Endothelial cell of umbilical vein (primary cell): ENCODE measurements at regions of chr22 and their contacts with region 1.

Region 1: DNA sequence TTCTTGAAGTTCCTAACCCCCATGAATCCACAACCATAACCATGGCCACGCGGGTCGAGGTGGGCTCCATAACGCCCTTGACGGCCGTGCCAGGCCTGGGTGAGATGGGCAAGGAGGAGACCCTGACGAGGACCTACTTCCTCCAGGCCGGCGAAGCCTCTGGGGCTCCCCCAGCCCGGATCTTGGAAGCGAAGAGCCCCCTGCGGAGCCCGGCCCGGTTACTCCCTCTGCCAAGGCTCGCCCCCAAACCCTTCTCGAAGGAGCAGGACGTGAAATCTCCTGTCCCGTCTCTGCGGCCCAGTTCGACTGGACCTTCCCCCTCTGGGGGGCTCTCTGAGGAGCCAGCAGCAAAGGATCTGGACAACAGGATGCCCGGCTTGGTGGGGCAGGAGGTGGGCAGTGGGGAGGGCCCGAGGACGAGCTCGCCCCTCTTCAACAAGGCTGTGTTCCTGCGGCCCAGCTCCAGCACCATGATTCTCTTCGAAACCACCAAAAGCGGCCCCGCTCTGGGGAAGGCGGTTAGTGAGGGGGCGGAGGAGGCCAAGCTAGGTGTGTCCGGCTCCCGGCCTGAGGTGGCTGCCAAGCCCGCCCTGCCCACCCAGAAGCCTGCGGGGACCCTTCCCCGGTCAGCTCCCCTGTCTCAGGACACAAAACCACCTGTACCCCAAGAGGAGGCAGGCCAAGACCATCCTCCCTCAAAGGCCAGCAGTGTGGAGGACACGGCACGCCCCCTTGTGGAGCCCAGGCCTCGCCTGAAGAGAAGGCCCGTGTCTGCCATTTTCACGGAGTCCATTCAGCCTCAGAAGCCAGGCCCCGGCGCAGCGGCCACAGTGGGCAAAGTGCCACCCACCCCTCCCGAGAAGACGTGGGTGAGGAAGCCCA is 75.7 kb downstream of the KIAA1671 start:
- DNase-seq: peak; percentile 39
- H3K4me3 ChIP-seq: no peak overlapping the region
- H3K27ac ChIP-seq: peak overlapping the region; percentile 12
- H3K4me1 ChIP-seq: peaks cover 19% of the 10 kb centered on the region
- H3K27me3 ChIP-seq: no peaks in the 10 kb centered on the region
- CTCF ChIP-seq: peak; percentile 60 to 81
- POLR2A ChIP-seq: no peak

Region 2: DNA sequence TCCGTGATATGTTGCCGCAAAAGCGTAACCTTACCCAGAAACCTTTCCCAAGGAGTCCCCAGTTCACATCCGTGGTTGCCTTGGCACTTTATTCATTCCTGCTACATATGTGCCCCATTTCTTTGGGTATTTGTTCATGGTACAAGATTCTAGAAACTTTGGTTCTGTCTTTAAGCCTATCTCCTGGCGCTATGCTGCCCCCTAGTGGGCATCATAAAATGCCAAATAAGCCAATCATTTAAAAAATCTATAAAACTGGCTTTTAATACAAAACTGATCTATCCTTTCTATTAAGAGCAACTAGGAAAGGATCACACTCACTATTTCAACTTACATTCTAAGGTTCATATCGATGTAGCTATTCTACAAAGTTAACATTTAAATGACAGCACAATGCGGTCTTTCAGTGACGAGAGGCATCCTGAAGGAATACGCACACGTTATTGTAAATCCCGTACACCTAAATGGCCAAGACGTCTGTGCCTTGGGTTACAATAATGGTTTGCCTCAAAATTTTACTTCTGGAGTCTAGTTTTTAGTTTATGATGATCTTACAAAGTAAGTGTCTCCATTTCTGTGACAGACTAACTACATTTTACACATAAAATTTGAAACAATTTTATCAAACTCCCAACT is 269.9 kb before region 1 on chr22:
- CTCF ChIA-PET with region 1: no interaction called
- POLR2A ChIA-PET with region 1: no interaction called
- dilution Hi-C with region 1: no loop called
- intact Hi-C with region 1: no loop called
- DNase-seq: peak; percentile 70
- H3K4me3 ChIP-seq: no peak overlapping the region
- H3K27ac ChIP-seq: no peak overlapping the region
- H3K4me1 ChIP-seq: peaks cover 25% of the 10 kb centered on the region
- H3K27me3 ChIP-seq: peaks cover 2 to 7% of the 10 kb centered on the region in 2 experiments
- CTCF ChIP-seq: peak; percentile 60 to 70
- POLR2A ChIP-seq: no peak

Region 3: DNA sequence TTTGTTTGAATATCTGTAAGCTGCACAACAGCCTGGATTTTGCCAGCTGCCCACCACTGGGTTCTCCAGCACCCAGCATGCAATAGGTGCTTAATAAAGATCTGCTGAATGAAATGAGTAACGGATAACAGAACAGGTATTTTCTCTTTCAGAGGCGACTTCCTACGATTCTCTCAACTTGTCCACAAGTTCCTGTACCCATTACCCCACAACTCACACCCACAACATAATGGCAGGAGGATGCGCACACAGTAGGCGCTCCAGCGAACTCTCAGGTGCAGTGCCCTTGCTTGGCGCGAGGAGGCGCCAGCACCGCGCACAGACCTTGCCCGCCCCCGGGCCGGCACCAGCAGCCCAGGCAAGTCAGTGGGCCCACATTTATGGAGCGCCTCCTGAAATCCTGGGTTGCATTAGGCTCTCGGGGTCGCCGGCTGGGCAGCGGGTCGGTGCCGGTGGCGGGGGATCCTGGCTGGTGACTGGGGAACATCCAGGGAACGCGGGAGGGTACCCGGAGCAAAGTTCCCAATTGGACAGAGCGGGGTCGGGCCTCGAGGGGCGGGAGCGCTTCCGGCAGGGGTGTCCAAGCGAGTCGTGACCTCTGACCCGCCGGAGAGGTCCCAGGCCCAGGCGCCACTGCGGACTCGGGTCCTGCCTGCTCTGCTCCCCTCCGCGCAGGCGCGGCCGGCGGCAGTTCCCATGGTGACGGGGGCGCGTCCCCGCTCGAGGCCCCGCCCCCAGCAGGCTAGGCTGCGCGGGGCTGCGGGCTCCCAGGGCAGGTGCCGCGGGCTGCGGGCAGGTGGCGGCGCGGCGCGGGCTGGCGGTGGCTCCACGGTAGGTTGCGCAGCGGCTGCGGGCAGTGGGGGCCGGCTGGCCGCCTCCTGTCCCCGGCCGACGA is 76.0 kb before region 1 on chr22 and contains the start of gene KIAA1671:
- CTCF ChIA-PET with region 1: interaction called, 18 read pairs
- POLR2A ChIA-PET with region 1: interaction called, 4 read pairs
- dilution Hi-C with region 1: no loop called
- intact Hi-C with region 1: loop called (anchors 1 kb)
- DNase-seq: peak; percentile 87
- H3K4me3 ChIP-seq: peak within 1 kb of the TSS; percentile 56 to 82 (median 70)
- H3K27ac ChIP-seq: peak within 1 kb of the TSS; percentile 94
- H3K4me1 ChIP-seq: peaks cover 9% of the 10 kb centered on the region
- H3K27me3 ChIP-seq: peaks cover 0 to 9% of the 10 kb centered on the region in 2 experiments
- CTCF ChIP-seq: peak; percentile 99 to 100
- POLR2A ChIP-seq: no peak
- total RNA-seq, gene KIAA1671: 78.9 and 85.1 TPM in 2 replicates

Region 4: DNA sequence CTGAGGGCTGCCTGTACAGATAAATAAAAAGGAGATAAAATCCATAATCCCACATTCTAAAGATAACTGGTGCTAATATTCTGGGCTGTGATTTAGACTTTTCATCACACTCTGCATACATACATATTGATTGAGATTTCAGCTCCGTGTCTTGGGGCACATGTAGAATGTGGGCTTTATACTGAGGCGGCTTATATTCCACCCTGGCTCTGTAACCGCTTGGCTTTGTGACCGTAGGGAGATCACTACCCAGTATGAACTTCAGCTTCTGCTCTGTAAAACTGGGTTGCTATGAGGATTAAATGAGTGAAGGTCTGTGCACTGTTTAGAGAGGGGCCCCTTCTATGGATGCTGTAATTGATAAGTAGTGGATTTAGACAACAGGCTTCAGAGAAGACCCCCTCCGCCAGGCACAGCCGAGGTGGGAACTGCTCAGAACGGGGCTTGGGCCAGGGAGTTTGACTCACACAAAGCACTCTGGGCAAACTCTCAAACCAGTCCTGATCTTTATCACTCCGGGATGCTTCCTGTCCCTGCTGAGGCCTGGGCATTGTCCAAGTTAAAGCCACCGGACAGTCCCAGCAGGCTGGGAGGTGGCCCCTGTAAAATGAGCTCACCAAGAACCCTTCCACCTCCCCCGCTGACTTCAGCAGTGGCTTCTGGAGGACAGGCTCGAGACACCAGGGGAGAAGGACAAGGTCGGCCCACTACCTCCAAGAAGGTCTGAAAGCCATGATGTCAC is 58.5 kb before region 1 on chr22:
- CTCF ChIA-PET with region 1: interaction called, 8 read pairs
- POLR2A ChIA-PET with region 1: no interaction called
- dilution Hi-C with region 1: no loop called
- intact Hi-C with region 1: loop called (anchors 5 kb)
- DNase-seq: peak; percentile 86
- H3K4me3 ChIP-seq: no peak overlapping the region
- H3K27ac ChIP-seq: peak overlapping the region; percentile 82
- H3K4me1 ChIP-seq: peaks cover 34% of the 10 kb centered on the region
- H3K27me3 ChIP-seq: no peaks in the 10 kb centered on the region
- CTCF ChIP-seq: no peak
- POLR2A ChIP-seq: no peak

Region 5: GRCh38 chr22:24985826-24986214 is 42.4 kb before region 1 on chr22:
- CTCF ChIA-PET with region 1: interaction called, 21 read pairs
- POLR2A ChIA-PET with region 1: interaction called, 6 read pairs
- dilution Hi-C with region 1: no loop called
- intact Hi-C with region 1: loop called (anchors 1 kb)
- DNase-seq: peak; percentile 99
- H3K4me3 ChIP-seq: no peak overlapping the region
- H3K27ac ChIP-seq: peak overlapping the region; percentile 88
- H3K4me1 ChIP-seq: peaks cover 66% of the 10 kb centered on the region
- H3K27me3 ChIP-seq: no peaks in the 10 kb centered on the region
- CTCF ChIP-seq: no peak
- POLR2A ChIP-seq: peak; percentile 89

Region 6: DNA sequence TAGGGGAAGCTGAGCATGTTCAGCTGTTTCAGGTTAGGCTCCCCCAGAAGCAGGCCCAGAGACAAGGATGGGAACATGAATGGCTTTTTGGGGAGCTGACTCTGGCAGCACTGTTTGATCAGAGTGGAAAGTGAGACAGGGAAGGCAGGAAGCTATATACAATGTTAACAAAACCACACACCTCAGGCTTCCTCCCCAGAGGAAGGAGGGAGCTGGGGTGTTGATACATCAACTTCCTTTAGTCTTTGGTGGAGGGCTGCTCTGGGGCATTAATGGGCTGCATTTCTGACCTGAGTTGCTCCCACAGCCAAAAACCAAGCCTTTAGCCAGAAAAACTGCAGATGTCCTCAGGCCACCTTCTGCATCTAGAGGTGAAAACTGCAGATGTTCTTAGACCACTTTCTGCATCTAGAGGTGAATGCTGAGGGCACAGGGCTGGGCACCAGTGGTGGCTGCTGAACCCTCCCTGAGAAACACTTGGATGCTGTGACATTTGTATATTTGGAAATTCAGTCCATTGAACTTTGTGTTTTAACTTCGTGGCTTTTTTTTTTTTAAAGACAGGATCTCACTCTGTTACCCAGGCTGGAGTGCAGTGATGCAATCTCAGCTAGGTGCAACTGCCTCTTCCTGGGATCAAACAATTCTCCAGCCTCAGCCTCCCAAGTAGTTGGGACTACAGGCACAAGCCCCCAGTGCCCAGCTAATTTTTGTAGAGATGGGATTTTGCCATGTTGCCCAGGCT is 25.8 kb before region 1 on chr22:
- CTCF ChIA-PET with region 1: interaction called, 5 read pairs
- POLR2A ChIA-PET with region 1: no interaction called
- dilution Hi-C with region 1: no loop called
- intact Hi-C with region 1: loop called (anchors 2 kb)
- DNase-seq: peak; percentile 35
- H3K4me3 ChIP-seq: no peak overlapping the region
- H3K27ac ChIP-seq: peak overlapping the region; percentile 44
- H3K4me1 ChIP-seq: peaks cover 17% of the 10 kb centered on the region
- H3K27me3 ChIP-seq: no peaks in the 10 kb centered on the region
- CTCF ChIP-seq: no peak
- POLR2A ChIP-seq: no peak

Region 7: DNA sequence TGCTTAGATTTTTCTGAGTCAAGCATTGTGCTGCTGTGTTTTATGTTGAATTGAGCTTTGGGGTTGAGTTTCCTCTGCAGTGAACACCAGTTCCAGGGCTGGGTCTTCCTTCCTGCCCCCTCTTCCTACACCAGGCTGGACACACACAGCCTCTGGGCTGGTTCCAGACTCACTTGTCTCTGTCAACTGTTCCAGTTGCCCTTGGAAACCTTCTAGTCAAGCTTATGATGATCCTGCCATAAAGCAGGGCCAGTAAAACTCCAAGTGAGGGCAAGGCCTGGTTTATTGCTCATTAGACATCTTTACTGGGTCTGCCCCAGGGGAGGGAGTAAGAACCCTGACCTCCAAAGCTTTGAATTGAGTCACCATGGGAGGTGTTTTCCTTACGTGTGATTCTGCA is 14.6 kb before region 1 on chr22:
- CTCF ChIA-PET with region 1: interaction called, 12 read pairs
- POLR2A ChIA-PET with region 1: no interaction called
- dilution Hi-C with region 1: no loop called
- intact Hi-C with region 1: no loop called
- DNase-seq: peak; percentile 74
- H3K4me3 ChIP-seq: no peak overlapping the region
- H3K27ac ChIP-seq: peak overlapping the region; percentile 55
- H3K4me1 ChIP-seq: peaks cover 30% of the 10 kb centered on the region
- H3K27me3 ChIP-seq: no peaks in the 10 kb centered on the region
- CTCF ChIP-seq: no peak
- POLR2A ChIP-seq: no peak

Region 8: DNA sequence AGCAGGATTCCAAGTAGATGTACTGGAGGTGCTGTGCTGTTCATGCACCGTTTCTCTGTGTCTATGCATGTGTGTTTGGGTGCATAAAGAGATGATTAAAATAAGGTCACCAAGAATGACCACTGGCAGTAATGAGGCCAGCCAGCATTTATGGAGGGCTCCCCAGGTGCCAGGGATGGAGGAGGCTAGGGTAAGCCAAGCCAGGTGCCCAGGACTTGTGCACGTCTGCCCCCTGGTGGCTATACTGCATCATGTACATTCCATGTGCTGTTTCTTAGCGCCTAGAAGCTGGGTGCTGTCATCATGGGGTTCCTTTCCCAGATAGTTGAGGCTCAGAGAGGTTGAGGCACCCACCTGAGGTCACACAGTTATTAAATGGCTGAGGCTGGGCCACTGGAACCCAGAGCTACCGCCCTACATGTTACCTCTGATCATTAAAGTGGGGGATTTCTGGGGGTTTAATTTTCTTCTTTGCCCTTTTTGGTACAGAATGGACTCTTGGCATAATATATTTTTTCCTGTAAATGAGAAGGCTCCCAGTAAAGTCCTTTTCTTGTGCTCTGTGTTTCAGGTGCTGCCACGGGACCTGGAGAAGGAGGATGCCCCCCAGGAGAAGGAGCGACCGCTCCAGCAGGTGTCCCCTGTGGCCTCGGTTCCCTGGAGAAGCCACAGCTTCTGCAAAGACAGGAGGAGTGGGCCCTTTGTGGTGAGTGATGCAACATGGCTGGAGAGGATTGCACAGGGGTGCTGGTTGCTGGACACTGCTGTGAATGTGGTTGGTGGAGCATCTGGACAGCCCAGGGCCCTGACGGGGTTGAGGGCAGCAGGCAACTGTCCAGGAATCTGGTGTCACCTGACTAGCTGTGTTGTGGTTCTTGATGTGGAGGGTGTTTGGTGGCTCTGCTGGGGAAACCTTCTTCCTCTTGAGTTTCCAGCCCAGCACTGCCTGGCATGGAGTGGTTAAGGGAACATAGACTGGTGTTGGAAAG is 20.8 kb after region 1 on chr22:
- CTCF ChIA-PET with region 1: interaction called, 18 read pairs
- POLR2A ChIA-PET with region 1: no interaction called
- dilution Hi-C with region 1: no loop called
- intact Hi-C with region 1: no loop called
- DNase-seq: peak; percentile 63
- H3K4me3 ChIP-seq: no peak overlapping the region
- H3K27ac ChIP-seq: no peak overlapping the region
- H3K4me1 ChIP-seq: peaks cover 4% of the 10 kb centered on the region
- H3K27me3 ChIP-seq: no peaks in the 10 kb centered on the region
- CTCF ChIP-seq: peak; percentile 82 to 88
- POLR2A ChIP-seq: no peak

Region 9: GRCh38 chr22:25219948-25220442 is 191.8 kb after region 1 on chr22:
- CTCF ChIA-PET with region 1: no interaction called
- POLR2A ChIA-PET with region 1: no interaction called
- dilution Hi-C with region 1: no loop called
- intact Hi-C with region 1: no loop called
- DNase-seq: no peak
- H3K4me3 ChIP-seq: no peak overlapping the region
- H3K27ac ChIP-seq: no peak overlapping the region
- H3K4me1 ChIP-seq: no peaks in the 10 kb centered on the region
- H3K27me3 ChIP-seq: peaks cover 0 to 10% of the 10 kb centered on the region in 2 experiments
- CTCF ChIP-seq: no peak
- POLR2A ChIP-seq: no peak

Region 10: GRCh38 chr22:25232301-25232700 is 204.1 kb after region 1 on chr22:
- CTCF ChIA-PET with region 1: no interaction called
- POLR2A ChIA-PET with region 1: no interaction called
- dilution Hi-C with region 1: no loop called
- intact Hi-C with region 1: no loop called
- DNase-seq: no peak
- H3K4me3 ChIP-seq: no peak overlapping the region
- H3K27ac ChIP-seq: no peak overlapping the region
- H3K4me1 ChIP-seq: peaks cover 3% of the 10 kb centered on the region
- H3K27me3 ChIP-seq: peaks cover 0 to 3% of the 10 kb centered on the region in 2 experiments
- CTCF ChIP-seq: no peak
- POLR2A ChIP-seq: no peak